Posterior cingulate gyrus (tissue), 11 donors: ENCODE measurements at regions of chrX and their contacts with region 1.

Region 1: DNA sequence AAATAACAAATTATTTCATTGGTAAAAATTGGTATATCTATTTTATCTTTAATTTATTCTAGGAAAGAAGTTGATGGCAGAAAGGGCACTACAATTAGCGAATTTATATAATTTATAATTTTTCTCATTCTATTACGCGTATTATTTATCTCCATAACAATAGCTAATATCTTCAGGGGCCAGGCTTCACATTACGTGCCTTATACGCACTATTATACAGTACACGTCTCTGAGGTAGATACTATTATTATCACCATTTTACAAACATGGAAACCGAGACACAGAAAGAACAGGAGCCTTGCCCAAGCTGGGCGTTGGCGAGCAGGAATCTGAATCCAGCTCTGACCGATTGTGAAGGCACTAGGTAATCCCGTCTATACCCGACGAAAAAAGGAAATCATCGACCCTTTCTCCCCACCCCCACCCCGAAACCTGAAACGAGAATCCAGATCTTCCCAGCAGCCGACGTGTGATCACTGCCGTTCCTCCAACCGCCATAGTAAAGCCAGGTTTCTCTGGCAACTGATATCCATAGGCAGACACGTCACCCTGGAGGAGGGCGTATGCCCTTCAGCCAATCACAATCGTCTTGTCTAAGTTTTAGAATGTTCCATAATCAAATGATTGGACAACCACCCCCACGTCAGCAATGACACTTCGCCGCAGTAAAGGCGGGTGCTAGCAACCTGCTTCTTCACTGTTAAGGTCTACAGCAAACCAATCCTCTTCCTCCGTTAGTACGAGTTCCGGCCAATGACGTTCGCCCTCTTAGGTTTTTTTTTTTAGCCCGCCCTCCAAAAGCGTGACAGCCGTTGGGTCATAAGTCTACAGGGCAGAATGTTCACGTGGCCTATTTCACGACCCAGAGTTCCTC is at the start of gene MORF4L2:
- DNase-seq: peak; percentile 68 to 98 (median 79)

Region 2: DNA sequence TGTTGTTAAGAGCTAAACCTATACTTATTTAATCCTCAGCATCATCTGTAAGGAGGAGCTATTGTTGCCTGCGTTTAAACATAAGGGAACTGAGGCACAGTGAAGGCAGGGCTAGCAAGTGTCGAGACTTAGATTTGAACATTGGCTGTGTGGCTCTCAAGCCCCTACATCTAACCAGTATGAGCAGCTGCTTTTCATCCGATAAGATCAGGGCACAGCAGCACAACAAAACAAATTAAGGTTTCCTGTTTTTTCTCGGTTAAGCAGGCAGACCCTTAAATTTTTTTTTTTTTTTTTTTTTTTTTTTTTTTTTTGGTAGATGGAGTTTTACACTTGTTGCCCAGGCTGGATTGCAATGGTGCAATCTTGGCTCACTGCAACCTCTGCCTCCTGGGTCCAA is 202.7 kb before region 1 on chrX:
- intact Hi-C with region 1: no loop called
- DNase-seq: no peak

Region 3: DNA sequence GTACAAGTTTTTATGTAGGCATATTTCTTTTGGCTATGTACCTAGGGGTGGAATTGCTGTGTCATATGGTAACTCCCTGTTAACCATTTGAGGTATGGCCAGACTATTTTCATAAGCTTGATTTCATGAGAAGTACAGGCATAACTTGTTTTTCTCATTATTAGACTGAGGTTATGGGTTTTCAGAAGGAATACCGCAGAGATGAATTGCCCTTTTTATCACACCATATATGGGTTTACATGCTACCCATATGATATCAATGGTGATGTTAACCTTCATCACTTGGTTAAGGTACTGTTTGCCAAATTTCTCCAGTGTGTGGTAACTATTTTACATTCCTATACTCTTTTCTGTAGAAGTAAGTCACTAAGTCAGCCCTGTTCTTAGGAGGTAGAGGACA is 190.7 kb before region 1 on chrX:
- intact Hi-C with region 1: no loop called
- DNase-seq: no peak

Region 4: GRCh38 chrX:103533511-103534216 is 152.8 kb before region 1 on chrX:
- intact Hi-C with region 1: loop called (anchors 5 kb)
- DNase-seq: peak; percentile 60 to 96 (median 78)

Region 5: GRCh38 chrX:103614992-103615391 is 71.4 kb before region 1 on chrX:
- intact Hi-C with region 1: no loop called
- DNase-seq: no peak

Region 6: DNA sequence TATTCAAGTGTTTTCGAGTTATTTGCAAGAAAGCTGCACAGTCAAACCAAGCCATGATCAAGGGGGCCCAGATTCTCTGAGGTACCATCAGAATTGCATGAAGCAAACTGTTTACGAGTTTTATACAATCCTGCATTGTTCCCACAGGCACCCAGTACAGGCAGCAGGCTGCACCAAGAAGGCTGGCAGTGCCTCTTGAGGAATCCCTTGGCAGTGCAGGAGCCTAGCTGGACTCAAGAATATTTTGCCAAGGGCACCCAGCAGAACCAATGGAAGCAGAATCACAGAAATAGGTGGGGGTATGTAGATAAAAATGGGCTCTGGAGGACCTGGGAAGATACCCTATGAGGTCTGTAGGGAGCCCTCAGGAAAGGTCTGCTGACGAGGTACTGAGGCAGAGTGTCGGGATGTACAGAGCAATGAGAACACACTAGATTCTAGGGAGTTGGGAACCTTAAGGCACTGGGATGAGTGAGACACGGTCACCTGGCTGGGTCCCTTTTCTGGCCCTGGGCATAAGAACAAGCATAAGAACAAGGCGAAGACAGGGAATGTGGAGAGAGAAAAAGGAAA is 87.7 kb after region 1 on chrX:
- intact Hi-C with region 1: loop called (anchors 2 kb)
- DNase-seq: peak in 3 of 10 donors; percentile 26 to 87 (median 39)

Region 7: DNA sequence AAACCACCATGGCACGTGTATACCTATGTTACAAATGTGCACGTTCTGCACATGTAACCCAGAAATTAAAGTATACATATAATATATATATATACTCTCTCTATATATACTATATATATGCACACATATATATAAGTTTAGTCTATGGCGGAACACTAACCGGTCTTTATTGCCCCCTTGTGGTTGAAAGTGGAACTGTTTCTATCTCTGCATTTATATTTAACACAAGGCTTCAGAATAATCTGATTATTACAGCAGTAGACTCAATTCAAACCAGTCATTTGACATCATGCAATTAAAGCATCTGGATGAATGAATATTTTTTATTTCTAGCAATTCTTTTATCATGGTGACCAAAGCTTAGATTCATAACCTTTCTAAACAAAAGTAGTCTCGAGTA is 131.1 kb after region 1 on chrX:
- intact Hi-C with region 1: loop called (anchors 2 kb)
- DNase-seq: no peak

Region 8: GRCh38 chrX:103831803-103832544 is 145.5 kb after region 1 on chrX and contains the start of gene RAB9B:
- intact Hi-C with region 1: loop called (anchors 5 kb)
- DNase-seq: peak; percentile 22 to 95 (median 68)

Region 9: GRCh38 chrX:104156630-104157529 is 470.4 kb after region 1 on chrX and contains the start of gene SLC25A53:
- intact Hi-C with region 1: loop called (anchors 5 kb)
- DNase-seq: peak; percentile 64 to 96 (median 74)